Right cardiac atrium (tissue), 5 donors: ENCODE measurements at regions of chr20 and their contacts with region 1.

Region 1: DNA sequence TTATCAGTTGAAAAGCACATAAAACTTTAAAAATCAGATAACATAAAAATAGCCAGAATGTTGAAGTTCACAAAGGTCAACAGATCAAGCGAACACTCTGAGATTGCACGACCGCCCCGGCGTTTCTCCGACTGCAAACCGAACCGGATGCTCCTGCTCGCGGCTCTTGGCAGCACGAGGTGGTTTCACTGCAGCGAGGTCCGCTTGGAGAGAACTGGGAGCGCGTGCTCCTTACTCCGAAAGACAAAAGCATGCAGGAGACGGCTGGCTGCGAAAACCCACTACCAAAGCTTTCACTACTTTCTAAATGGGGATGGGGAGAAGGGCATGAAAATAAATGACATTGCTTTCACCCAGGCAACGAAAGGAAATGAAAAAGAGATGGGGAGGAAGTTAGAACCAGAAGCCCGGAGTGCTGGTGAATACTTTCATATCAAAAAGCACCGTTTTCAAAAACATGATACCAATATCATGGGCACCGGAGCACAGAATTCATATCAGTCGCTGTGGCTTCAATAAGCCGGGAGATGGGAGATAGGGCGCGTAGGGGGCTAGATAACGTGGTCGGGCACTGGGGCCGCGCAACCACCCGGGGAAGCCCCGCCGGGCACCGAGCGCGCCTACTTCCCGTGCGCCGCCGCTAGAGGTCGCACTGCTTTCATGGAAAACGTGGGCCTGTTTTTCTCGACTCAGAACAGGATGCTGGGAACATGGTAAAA is 8.3 kb upstream of the ANKRD60 start:
- DNase-seq: peak; percentile 67 to 89 (median 87)
- ATAC-seq: peak; percentile 90 to 92
- H3K4me3 ChIP-seq: peak overlapping the region; percentile 52
- H3K27ac ChIP-seq: no peak overlapping the region
- H3K4me1 ChIP-seq: no peaks in the 10 kb centered on the region
- H3K27me3 ChIP-seq: no peaks in the 10 kb centered on the region

Region 2: GRCh38 chr20:58447511-58448391 is 211.0 kb after region 1 on chr20:
- intact Hi-C with region 1: loop called in 3 of 4 experiments (anchors 5 to 10 kb)
- DNase-seq: peak in 1 of 3 donors; percentile 40
- ATAC-seq: peak in 1 of 2 donors; percentile 61
- H3K4me3 ChIP-seq: no peak overlapping the region
- H3K27ac ChIP-seq: no peak overlapping the region
- H3K4me1 ChIP-seq: no peaks in the 10 kb centered on the region
- H3K27me3 ChIP-seq: no peaks in the 10 kb centered on the region

Region 3: GRCh38 chr20:58458180-58459057 is 221.6 kb after region 1 on chr20:
- intact Hi-C with region 1: loop called in 1 of 4 experiments (anchors 10 kb)
- DNase-seq: no peak
- ATAC-seq: no peak
- H3K4me3 ChIP-seq: no peak overlapping the region
- H3K27ac ChIP-seq: no peak overlapping the region
- H3K4me1 ChIP-seq: no peaks in the 10 kb centered on the region
- H3K27me3 ChIP-seq: no peaks in the 10 kb centered on the region

Region 4: GRCh38 chr20:58650776-58651558 is 414.2 kb after region 1 on chr20 and contains the start of gene STX16:
- intact Hi-C with region 1: loop called in 2 of 4 experiments (anchors 10 kb)
- DNase-seq: peak; percentile 90 to 96 (median 96)
- ATAC-seq: peak; percentile 96 to 97
- H3K4me3 ChIP-seq: peak within 1 kb of the TSS; percentile 87
- H3K27ac ChIP-seq: peak within 1 kb of the TSS; percentile 93
- H3K4me1 ChIP-seq: peaks cover 3% of the 10 kb centered on the region
- H3K27me3 ChIP-seq: no peaks in the 10 kb centered on the region
- total RNA-seq, gene STX16: 28.0 to 35.0 (median 33.3) TPM

Region 5: DNA sequence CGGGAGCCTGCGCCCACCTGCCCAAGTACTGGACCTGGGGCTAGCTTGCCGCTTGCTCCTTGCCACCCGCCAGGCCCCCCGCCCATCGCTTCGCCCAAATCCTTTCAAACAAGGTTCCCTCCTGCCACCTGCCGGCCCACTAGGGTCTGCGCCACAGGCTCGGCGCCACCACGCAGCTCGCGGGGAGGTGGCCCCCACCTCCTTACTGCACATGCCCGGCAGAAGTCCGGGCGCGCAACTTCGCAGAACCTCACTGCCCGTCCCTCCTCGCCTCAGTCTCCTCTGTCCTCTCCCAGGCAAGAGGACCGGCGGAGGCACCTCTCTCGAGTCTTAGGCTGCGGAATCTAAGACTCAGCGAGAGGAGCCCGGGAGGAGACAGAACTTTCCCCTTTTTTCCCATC is 602.7 kb after region 1 on chr20:
- intact Hi-C with region 1: loop called in 3 of 4 experiments (anchors 5 to 10 kb)
- DNase-seq: peak; percentile 52 to 77 (median 71)
- ATAC-seq: peak; percentile 74 to 85
- H3K4me3 ChIP-seq: no peak overlapping the region
- H3K27ac ChIP-seq: no peak overlapping the region
- H3K4me1 ChIP-seq: no peaks in the 10 kb centered on the region
- H3K27me3 ChIP-seq: no peaks in the 10 kb centered on the region

Region 6: GRCh38 chr20:58850693-58851174 is 614.0 kb after region 1 on chr20 and contains the start of gene GNAS-AS1:
- intact Hi-C with region 1: loop called in 3 of 4 experiments (anchors 10 kb)
- DNase-seq: peak; percentile 87 to 94 (median 94)
- ATAC-seq: peak; percentile 80 to 89
- H3K4me3 ChIP-seq: peak within 1 kb of the TSS; percentile 39
- H3K27ac ChIP-seq: no peak within 1 kb of the TSS
- H3K4me1 ChIP-seq: no peaks in the 10 kb centered on the region
- H3K27me3 ChIP-seq: no peaks in the 10 kb centered on the region
- total RNA-seq, gene GNAS-AS1: 0.42 to 0.74 (median 0.50) TPM